ENCODE measurements at regions of chr1 and their contacts with region 1.

Region 1: GRCh38 chr1:168280296-168280927 is at the start of gene TBX19:
- DNase-seq: no peak
- H3K4me3 ChIP-seq: no peak within 1 kb of the TSS
- H3K27ac ChIP-seq: no peak within 1 kb of the TSS
- H3K4me1 ChIP-seq: peaks cover 5% of the 10 kb centered on the region
- H3K27me3 ChIP-seq: no peaks in the 10 kb centered on the region
- CTCF ChIP-seq: no peak
- POLR2A ChIP-seq: no peak
- total RNA-seq, gene TBX19: 3.9 TPM

Region 2: DNA sequence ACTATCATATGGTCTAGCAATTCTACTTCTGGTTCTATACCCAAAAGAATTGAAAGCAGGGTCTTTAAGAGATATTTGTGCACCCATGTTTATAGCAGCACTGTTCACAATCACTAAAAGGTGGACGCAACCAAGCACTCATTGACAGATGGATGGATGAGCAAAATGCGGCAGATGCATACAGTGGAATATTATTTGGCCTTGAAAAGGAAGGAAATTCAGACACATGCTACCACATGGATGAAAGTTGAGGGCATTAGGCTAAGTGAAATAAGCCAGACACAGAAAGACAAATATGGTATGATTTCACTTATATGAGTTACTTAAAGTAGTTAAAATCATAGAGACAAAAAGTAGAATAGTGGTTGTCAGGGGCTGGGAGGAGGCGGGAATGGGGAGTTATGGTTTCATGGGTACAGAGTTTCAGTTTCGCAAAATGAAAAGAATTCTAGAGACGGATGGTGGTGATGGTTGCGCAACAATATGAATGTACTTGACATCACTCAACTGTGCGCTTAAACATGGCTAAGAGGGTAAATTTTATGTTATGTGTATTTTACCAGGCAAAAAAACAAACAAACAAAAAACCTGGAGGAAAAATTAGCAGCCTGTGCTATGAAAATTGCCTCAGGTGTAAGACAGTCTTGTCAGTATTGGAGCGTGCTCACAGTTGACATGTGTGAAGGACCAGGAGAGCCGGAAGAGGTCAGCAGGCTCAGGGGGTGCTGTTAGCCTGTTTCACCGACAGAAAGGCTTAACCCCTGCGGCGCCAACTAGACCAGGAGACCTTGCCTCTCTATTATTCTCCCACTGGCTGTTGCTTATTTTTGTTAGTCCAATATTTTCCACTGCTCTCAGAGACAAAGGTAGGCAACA is 788.6 kb before region 1 on chr1:
- intact Hi-C with region 1: no loop called
- DNase-seq: no peak
- H3K4me3 ChIP-seq: no peak overlapping the region
- H3K27ac ChIP-seq: no peak overlapping the region
- H3K4me1 ChIP-seq: no peaks in the 10 kb centered on the region
- H3K27me3 ChIP-seq: no peaks in the 10 kb centered on the region
- CTCF ChIP-seq: no peak
- POLR2A ChIP-seq: no peak

Region 3: DNA sequence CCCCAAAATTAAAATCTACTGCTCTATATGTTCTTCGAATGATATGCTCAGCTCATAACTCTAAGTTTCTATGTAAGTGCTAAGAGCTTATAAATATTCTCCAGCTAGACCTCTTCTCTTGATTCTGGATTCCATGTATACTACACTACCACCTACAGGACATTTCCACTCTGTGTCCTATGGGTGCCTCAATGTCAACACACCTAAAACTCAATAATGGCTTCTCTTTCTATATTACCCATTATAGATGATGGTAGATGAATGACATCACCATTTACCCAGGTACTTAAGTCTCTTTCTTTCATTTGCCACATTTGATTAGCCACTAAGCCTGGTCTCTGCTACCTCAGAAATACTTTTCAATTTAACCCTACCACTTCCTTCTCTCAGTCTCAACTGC is 41.5 kb after region 1 on chr1:
- intact Hi-C with region 1: no loop called
- DNase-seq: no peak
- H3K4me3 ChIP-seq: no peak overlapping the region
- H3K27ac ChIP-seq: no peak overlapping the region
- H3K4me1 ChIP-seq: no peaks in the 10 kb centered on the region
- H3K27me3 ChIP-seq: no peaks in the 10 kb centered on the region
- CTCF ChIP-seq: no peak
- POLR2A ChIP-seq: no peak

Region 4: GRCh38 chr1:168342572-168343280 is 62.3 kb after region 1 on chr1:
- intact Hi-C with region 1: no loop called
- DNase-seq: peak in 1 of 2 donors; percentile 96
- H3K4me3 ChIP-seq: peak overlapping the region; percentile 15 to 33
- H3K27ac ChIP-seq: peak overlapping the region; percentile 69
- H3K4me1 ChIP-seq: peaks cover 22% of the 10 kb centered on the region
- H3K27me3 ChIP-seq: no peaks in the 10 kb centered on the region
- CTCF ChIP-seq: peak; percentile 76 to 84 (median 84)
- POLR2A ChIP-seq: no peak

Region 5: DNA sequence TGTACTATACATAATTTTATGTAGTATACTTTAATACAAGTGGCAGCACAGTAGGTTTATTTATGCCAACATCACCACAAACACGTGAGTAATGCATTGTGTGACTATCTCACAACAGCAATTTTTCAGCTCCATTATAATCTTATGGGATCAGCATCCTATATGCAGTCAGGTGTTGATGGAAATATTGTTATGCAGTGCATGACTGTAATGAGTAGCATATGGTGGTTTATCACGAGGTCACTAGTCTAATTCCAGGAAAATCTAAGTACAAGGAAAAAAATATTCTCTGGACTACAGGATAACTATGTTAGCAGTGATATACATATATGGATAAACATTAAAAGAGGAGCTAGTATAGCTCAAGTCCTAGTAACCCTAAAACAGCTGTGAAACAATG is 895.0 kb after region 1 on chr1:
- intact Hi-C with region 1: loop called (anchors 2 kb)
- DNase-seq: no peak
- H3K4me3 ChIP-seq: no peak overlapping the region
- H3K27ac ChIP-seq: no peak overlapping the region
- H3K4me1 ChIP-seq: no peaks in the 10 kb centered on the region
- H3K27me3 ChIP-seq: no peaks in the 10 kb centered on the region
- CTCF ChIP-seq: no peak
- POLR2A ChIP-seq: no peak